ENCODE measurements at regions of chr19 and their contacts with region 1.

Region 1: DNA sequence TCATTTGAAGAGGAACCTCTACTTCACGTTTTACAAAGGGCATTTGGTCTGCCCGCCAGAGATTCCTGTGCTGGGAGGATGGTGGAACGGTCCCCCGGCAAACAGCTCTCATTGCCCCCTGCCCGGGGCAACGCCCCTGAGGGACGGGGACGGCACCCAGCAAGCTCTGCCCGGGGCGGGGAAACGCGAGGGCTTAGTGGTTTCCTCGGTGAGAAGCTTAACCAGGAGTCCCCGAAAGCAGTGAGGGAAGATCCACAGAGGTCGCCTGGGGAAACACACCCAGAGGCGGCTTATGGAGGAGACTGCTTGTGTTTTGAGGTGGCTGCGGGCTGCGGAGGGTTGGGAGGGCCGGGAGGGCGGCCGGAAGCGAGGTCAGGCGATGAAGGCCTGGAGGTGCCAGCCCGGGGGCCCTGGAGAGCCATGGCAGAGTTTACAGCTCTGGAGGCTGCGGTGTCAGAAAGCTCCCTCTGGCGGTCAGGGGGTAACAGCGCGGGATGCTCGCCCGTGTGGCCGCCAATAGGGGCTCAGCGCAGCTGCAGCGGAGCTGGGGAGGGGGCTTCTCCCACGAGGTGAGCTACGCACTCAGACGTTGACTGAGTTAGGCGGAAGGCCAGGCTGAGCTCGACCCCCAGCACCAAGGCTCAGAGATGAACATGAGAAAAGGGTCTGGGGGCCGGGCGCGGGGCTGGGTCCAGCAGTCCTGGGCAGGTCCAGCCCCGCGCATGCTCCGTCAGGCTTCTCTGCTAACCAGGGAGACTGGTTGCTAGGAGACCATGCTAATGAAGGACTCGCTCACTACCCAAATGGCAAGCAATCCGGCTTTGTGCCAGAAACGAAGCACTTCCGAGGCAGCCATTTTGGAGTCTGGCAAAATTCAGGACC is 652 bp upstream of the TPGS1 start:
- DNase-seq: peak; percentile 93
- H3K4me3 ChIP-seq: peak overlapping the region; percentile 82
- H3K27ac ChIP-seq: peak overlapping the region; percentile 96
- H3K4me1 ChIP-seq: peaks cover 25% of the 10 kb centered on the region
- H3K27me3 ChIP-seq: no peaks in the 10 kb centered on the region
- CTCF ChIP-seq: peak; percentile 99

Region 2: GRCh38 chr19:383922-384798 is 122.5 kb before region 1 on chr19:
- CTCF ChIA-PET with region 1: interaction called, 16 read pairs
- POLR2A ChIA-PET with region 1: no interaction called
- intact Hi-C with region 1: no loop called
- DNase-seq: peak; percentile 40
- H3K4me3 ChIP-seq: no peak overlapping the region
- H3K27ac ChIP-seq: no peak overlapping the region
- H3K4me1 ChIP-seq: no peaks in the 10 kb centered on the region
- H3K27me3 ChIP-seq: no peaks in the 10 kb centered on the region
- CTCF ChIP-seq: peak; percentile 62

Region 3: DNA sequence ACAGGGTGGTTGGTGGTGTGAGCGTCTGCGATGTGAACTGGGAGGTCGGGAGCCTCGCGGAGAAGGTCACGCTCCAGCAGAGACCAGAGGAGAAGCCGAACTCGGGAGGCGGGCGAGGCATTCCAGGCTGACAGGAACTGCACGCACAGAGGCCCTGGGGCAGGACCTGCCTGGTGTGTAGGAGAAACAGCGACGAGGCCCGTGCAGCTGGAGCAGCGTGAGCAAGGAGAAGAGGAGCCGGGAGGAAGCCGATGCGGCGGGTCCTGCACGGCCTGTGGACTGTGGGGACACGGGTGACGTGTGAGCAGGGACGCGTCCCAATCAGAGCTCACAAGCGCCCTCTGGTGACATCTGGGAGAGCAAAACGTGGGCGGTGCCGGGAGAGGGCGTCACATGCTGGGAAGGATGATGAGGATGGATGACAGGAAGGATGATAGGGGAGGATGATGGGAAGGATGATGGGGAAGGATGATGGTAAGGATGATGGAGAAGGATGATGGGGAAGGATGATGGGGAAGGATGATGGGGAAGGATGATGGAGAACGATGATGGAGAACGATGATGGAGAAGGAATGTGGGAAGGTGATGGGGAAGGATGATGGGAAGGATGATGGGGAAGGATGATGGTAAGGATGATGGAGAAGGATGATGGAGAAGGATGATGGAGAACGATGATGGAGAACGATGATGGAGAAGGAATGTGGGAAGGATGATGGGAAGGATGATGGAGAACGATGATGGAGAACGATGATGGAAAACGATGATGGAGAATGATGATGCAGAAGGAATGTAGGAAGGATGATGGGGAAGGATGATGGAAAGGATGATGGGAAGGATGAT is 26.4 kb before region 1 on chr19:
- CTCF ChIA-PET with region 1: interaction called, 16 read pairs
- POLR2A ChIA-PET with region 1: no interaction called
- intact Hi-C with region 1: no loop called
- DNase-seq: peak; percentile 85
- H3K4me3 ChIP-seq: no peak overlapping the region
- H3K27ac ChIP-seq: no peak overlapping the region
- H3K4me1 ChIP-seq: peaks cover 10% of the 10 kb centered on the region
- H3K27me3 ChIP-seq: peaks cover 10% of the 10 kb centered on the region
- CTCF ChIP-seq: peak; percentile 86

Measured in A673 (cell line).